Activated T-helper 2 cell treated with anti-CD3 and anti-CD28 coated beads, Interferon-gamma antibody, Interleukin-2, Interleukin-4, amounts not matched to agents 10 μg/mL and 5 μg/mL and 100 μg/mL, durations not matched to agents 14 hours and 24 hours and 36 hours (primary cell): ENCODE measurements at regions of chr9 and their contacts with region 1.

Region 1: DNA sequence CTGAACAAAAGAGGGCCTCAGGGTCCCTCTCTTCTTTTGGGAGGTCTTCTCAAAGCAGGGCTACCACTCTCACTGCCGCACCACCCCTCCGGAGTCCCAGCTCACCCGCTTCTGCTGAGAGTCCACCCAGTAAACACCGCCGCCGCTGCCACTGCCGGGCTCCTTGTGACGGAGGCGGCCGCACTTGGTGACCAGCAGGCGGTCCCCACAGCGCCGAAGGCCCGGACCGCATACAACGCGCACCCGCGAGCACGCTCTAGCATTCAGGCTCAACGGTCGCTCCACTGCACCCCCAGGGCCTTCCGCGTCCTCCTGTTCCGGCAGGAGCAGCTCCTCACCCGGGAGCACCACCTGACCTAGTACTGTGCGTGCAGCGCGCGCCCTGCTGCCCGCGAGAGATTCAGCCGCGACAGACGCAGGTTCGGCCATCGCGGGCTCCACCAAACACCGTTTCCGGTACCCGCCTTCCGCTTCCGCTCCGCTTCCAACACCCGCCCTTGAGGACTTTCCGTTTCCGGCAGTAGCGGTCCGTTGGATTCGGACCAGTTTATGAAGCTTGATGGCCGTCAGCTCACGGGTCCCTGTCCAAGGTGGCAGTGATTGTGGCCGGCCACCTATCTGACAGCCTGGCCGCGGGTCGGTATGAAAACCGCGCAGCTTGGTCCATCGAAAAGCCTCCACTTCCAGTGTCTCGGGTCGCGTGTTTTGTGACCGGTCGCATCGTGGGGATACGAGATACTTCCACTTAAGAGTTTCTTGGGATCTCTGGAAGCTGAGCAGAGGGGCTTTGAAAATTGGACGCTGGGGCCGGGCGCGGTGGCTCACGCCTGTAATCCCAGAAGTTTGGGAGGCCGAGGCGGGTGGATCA is at the start of gene EXOSC3:
- DNase-seq: peak; percentile 85
- H3K4me3 Mint-ChIP-seq: peak within 1 kb of the TSS; percentile 98
- H3K27ac Mint-ChIP-seq: peak within 1 kb of the TSS; percentile 96
- H3K4me1 Mint-ChIP-seq: peaks cover 29% of the 10 kb centered on the region
- H3K27me3 Mint-ChIP-seq: no peaks in the 10 kb centered on the region
- total RNA-seq, gene EXOSC3: 85.8 and 86.3 TPM in 2 replicates

Region 2: DNA sequence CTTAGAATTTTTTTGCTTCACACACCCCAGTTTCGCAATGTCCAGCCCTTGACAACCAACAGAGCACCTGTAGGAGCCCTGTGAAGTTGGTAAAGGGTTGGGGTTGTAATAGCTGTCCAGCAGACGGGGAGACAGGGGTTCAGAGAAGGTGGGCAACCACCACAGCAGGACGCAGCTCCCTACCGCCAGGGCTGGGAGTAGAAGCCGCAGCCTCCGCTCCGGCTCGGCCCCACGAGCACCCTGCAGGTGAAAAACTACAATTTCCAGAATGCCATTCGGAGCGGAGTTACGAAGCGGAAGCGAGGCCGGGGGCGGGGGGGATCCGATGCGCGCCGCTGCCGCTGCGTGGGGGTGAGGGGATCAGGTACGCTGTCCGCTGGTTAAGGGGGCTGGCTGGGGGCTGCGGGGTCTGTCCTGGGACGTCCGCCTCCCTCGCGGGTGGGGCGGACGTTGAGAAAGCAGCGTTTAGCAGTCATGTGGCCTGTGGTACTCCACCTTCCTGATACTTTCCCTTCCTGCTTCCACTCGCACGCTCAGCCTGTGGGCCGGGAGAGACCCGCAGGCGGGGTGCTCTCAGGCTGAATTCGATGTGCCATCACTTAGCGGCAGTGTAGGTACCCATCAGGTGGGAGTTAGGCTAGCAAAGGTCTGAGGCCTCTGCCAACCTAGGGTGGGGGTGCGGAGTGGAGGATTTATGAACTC is 31.2 kb before region 1 on chr9 and contains the start of gene TRMT10B:
- intact Hi-C with region 1: loop called (anchors 2 kb)
- DNase-seq: peak; percentile 61
- H3K4me3 Mint-ChIP-seq: peak within 1 kb of the TSS; percentile 97
- H3K27ac Mint-ChIP-seq: peak within 1 kb of the TSS; percentile 91
- H3K4me1 Mint-ChIP-seq: peaks cover 17% of the 10 kb centered on the region
- H3K27me3 Mint-ChIP-seq: no peaks in the 10 kb centered on the region
- total RNA-seq, gene TRMT10B: 11.8 and 12.1 TPM in 2 replicates